H1 (cell line): ENCODE measurements at regions of chr15 and their contacts with region 1.

Region 1: GRCh38 chr15:76185716-76186115 is 125.6 kb downstream of the ETFA start:
- DNase-seq: peak; percentile 54 to 65
- H3K4me3 ChIP-seq: no peak overlapping the region
- H3K27ac ChIP-seq: no peak overlapping the region
- H3K4me1 ChIP-seq: peaks cover 0 to 2% (median 0%) of the 10 kb centered on the region in 4 experiments; a peak in 2 of 7 replicates
- H3K27me3 ChIP-seq: peaks cover 0 to 6% (median 4%) of the 10 kb centered on the region in 4 experiments; a peak in 3 of 7 replicates
- CTCF ChIP-seq: peak; percentile 74 to 79 (median 76)
- EP300 ChIP-seq: no peak
- POLR2A ChIP-seq: no peak
- RAD21 ChIP-seq: peak; percentile 75 to 81

Region 2: GRCh38 chr15:76150971-76151598 is 34.6 kb before region 1 on chr15:
- CTCF ChIA-PET with region 1: interaction called, 17 read pairs
- POLR2A ChIA-PET with region 1: interaction called, 4 read pairs
- DNase-seq: peak; percentile 85 to 96
- H3K4me3 ChIP-seq: peak overlapping the region in 3 of 4 experiments; percentile 8 to 25 (median 23); a peak in 1 of 8 replicates
- H3K27ac ChIP-seq: no peak overlapping the region
- H3K4me1 ChIP-seq: peaks cover 0 to 26% (median 21%) of the 10 kb centered on the region in 4 experiments; a peak in 6 of 7 replicates
- H3K27me3 ChIP-seq: no peaks in the 10 kb centered on the region
- CTCF ChIP-seq: peak; percentile 90 to 91 (median 91)
- EP300 ChIP-seq: no peak
- POLR2A ChIP-seq: no peak
- RAD21 ChIP-seq: peak; percentile 72 to 82

Region 3: GRCh38 chr15:76169013-76169412 is 16.7 kb before region 1 on chr15:
- CTCF ChIA-PET with region 1: interaction called, 23 read pairs
- POLR2A ChIA-PET with region 1: no interaction called
- DNase-seq: no peak
- H3K4me3 ChIP-seq: no peak overlapping the region
- H3K27ac ChIP-seq: no peak overlapping the region
- H3K4me1 ChIP-seq: peaks cover 0 to 5% (median 0%) of the 10 kb centered on the region in 4 experiments; a peak in 1 of 7 replicates
- H3K27me3 ChIP-seq: no peaks in the 10 kb centered on the region
- CTCF ChIP-seq: no peak
- EP300 ChIP-seq: no peak
- POLR2A ChIP-seq: no peak
- RAD21 ChIP-seq: no peak

Region 4: DNA sequence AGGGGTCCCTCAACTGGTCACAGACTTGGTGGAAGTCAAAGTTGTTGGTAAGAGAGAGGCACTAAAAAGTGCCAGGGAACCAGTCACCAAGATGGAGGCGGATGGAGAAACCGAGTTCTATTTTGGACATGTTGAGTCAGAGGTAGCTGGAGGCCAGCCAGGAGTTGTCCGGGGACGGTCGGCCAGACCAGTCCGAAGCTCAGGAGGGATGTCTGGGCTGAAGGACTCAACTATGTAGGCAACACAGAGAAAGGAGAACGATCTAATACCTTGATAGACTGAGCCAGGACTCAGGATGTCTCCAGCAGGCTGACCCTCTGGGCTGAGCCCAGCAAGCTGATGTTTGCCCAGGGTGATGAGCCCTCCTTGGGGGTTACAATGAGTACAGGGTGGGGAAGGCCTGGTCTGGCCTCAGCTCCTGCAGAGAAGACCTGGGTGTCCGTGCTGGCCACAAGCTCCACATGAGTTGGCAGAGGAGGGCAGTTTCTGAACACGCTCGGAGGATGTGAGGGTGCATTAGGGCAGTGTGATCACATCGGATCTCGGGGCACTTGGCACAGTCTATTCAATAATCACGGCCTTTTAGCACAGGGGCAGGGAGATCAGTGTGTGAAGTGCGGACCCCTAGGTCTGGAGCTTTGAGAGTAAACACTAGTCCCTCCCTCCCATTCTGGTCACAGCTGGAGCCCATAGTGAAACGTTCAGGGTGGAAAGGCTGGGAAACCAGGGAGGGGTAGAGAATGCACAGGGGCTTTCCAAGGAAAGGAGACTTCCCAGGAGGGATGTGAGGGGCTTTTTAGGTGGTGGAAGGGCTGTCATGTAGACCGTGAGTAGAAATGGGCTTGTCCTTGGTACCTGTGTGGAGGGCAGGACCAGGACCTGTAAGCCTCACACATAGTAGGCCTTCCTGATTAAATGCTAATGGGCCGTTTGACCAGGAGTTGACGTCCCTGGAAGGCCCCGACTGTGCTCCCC is 13.7 kb after region 1 on chr15:
- CTCF ChIA-PET with region 1: interaction called, 13 read pairs
- POLR2A ChIA-PET with region 1: no interaction called
- DNase-seq: no peak
- H3K4me3 ChIP-seq: no peak overlapping the region
- H3K27ac ChIP-seq: no peak overlapping the region; the same call in 1 of the 2 replicates
- H3K4me1 ChIP-seq: peaks cover 0 to 20% (median 6%) of the 10 kb centered on the region in 4 experiments; a peak in 4 of 7 replicates
- H3K27me3 ChIP-seq: no peaks in the 10 kb centered on the region; a peak in 1 of 7 replicates
- CTCF ChIP-seq: no peak
- EP300 ChIP-seq: no peak
- POLR2A ChIP-seq: no peak
- RAD21 ChIP-seq: no peak

Region 5: GRCh38 chr15:76235186-76235826 is 49.6 kb after region 1 on chr15:
- CTCF ChIA-PET with region 1: interaction called, 14 read pairs
- POLR2A ChIA-PET with region 1: no interaction called
- DNase-seq: no peak
- H3K4me3 ChIP-seq: no peak overlapping the region
- H3K27ac ChIP-seq: no peak overlapping the region
- H3K4me1 ChIP-seq: peaks cover 0 to 8% (median 5%) of the 10 kb centered on the region in 4 experiments; a peak in 6 of 7 replicates
- H3K27me3 ChIP-seq: no peaks in the 10 kb centered on the region
- CTCF ChIP-seq: peak in 2 of 3 experiments; percentile 22 to 29; a peak in 2 of 4 replicates
- EP300 ChIP-seq: no peak
- POLR2A ChIP-seq: no peak
- RAD21 ChIP-seq: peak; percentile 56 to 59

Region 6: DNA sequence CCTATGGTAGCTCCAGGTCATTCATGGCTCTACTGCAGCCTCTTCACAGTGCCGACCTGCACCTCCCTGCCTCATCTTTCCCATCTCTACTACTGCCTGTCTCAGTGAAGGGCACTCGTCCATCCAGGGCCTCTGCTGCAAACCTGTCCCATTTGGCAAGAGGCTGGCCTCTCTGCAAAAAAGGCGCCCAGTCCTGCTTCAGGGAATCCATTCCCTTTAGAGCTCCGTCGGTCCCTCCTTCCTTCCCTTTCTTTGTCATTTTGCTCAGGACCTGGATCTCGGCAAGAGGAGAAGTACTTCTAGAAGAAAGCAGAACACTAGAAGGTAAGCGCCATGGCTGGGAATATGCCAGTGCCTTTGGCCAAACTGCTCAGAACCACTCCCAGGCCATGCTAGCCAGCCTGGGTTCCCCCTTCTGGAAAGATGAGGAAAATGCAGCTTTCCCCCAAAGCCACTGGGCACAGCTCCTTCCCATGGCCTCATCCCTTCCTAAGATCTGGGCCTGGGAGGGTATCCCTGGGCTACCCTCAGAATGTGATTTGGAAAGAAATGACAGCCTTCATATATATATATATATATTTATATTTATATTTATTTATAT is 144.5 kb after region 1 on chr15:
- CTCF ChIA-PET with region 1: interaction called, 130 read pairs
- POLR2A ChIA-PET with region 1: interaction called, 18 read pairs
- DNase-seq: peak in 1 of 2 experiments; percentile 66
- H3K4me3 ChIP-seq: no peak overlapping the region
- H3K27ac ChIP-seq: no peak overlapping the region
- H3K4me1 ChIP-seq: peaks cover 0 to 5% (median 3%) of the 10 kb centered on the region in 4 experiments; a peak in 6 of 7 replicates
- H3K27me3 ChIP-seq: peaks cover 0 to 13% (median 12%) of the 10 kb centered on the region in 4 experiments; a peak in 6 of 7 replicates
- CTCF ChIP-seq: peak; percentile 66 to 76 (median 72)
- EP300 ChIP-seq: no peak
- POLR2A ChIP-seq: no peak
- RAD21 ChIP-seq: peak; percentile 69 to 76